ENCODE measurements at regions of chr3 and their contacts with region 1.

Region 1: GRCh38 chr3:184154885-184155643 is at the start of gene DVL3:
- DNase-seq: peak; percentile 56

Region 2: GRCh38 chr3:184135149-184135910 is 19.7 kb before region 1 on chr3 and contains the start of gene EIF2B5:
- CTCF ChIA-PET with region 1: no interaction called
- POLR2A ChIA-PET with region 1: interaction called, 15 read pairs
- DNase-seq: peak; percentile 72

Region 3: GRCh38 chr3:184275961-184276910 is 121.2 kb after region 1 on chr3 and contains the start of gene ECE2:
- CTCF ChIA-PET with region 1: no interaction called
- POLR2A ChIA-PET with region 1: no interaction called
- DNase-seq: no peak